ENCODE measurements at regions of chr14 and their contacts with region 1.

Region 1: GRCh38 chr14:92135267-92135666 is 13.5 kb downstream of the CPSF2 start:
- DNase-seq: no peak
- H3K4me3 ChIP-seq: no peak overlapping the region
- H3K27ac ChIP-seq: no peak overlapping the region
- H3K4me1 ChIP-seq: no peaks in the 10 kb centered on the region
- H3K27me3 ChIP-seq: no peaks in the 10 kb centered on the region
- CTCF ChIP-seq: peak; percentile 36 to 53 (median 49)
- EP300 ChIP-seq: no peak
- POLR2A ChIP-seq: no peak

Region 2: DNA sequence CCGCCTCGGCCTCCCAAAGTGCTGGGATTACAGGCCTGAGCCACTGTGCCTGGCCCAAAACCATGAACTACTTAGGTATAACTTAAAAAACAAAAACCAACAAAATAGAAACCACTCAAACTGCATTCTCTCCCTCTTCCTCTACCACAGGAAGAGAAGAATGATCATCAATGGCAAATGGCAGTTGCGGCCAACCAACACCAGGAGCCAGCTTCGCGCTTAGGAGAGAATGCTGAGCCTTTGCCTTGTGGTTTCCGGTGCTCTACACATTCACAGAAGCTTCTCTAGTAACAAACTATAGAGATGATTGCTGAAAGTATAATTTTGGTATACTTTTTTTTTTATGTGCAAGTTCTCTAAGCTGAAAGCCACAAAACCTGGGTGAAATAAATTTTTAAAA is 420.5 kb before region 1 on chr14:
- in situ Hi-C with region 1: no loop called
- intact Hi-C with region 1: no loop called
- DNase-seq: no peak
- H3K4me3 ChIP-seq: no peak overlapping the region
- H3K27ac ChIP-seq: no peak overlapping the region
- H3K4me1 ChIP-seq: no peaks in the 10 kb centered on the region
- H3K27me3 ChIP-seq: no peaks in the 10 kb centered on the region
- CTCF ChIP-seq: no peak
- EP300 ChIP-seq: no peak
- POLR2A ChIP-seq: no peak

Region 3: DNA sequence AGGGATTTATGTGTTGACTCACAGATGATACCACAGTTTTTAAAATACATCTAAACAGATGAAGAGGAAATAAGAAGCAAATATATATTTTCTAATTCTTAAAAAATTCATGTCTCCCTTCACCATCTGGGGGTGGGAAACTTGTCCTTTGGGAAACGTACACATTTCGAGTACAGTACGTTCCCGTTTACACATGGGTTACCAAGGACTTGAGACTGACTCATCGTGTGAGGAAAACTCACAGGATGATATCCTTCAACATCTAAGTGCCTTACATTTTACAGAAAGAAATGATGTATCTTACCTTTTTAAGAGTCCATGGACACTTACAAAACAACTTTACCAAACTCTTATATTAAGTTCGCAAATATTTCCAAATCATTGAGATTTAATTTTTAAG is 171.8 kb before region 1 on chr14:
- in situ Hi-C with region 1: no loop called
- intact Hi-C with region 1: no loop called
- DNase-seq: no peak
- H3K4me3 ChIP-seq: no peak overlapping the region
- H3K27ac ChIP-seq: no peak overlapping the region
- H3K4me1 ChIP-seq: no peaks in the 10 kb centered on the region
- H3K27me3 ChIP-seq: no peaks in the 10 kb centered on the region
- CTCF ChIP-seq: no peak
- EP300 ChIP-seq: peak; percentile 23
- POLR2A ChIP-seq: no peak

Region 4: DNA sequence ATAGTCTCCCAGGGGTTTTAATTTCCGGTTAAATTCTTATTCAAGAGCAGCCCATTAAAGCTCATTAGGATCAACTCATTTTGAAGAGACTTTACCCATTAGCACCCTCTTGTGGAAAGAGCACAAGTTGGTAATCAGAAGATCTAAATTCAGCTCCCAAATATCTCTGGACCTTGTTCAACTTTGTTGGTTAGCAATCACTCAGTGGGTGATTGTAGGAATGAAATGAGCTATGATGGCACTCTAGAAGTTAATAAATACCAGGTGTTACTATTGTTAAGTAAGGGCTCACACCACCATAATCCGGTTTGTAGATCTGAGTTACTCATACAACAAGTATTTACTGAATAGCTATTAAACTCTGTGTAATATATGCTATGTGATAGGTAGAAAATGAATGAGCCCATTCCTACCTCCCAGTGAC is 138.3 kb before region 1 on chr14:
- in situ Hi-C with region 1: no loop called
- intact Hi-C with region 1: no loop called
- DNase-seq: no peak
- H3K4me3 ChIP-seq: no peak overlapping the region
- H3K27ac ChIP-seq: no peak overlapping the region
- H3K4me1 ChIP-seq: peaks cover 0 to 4% (median 2%) of the 10 kb centered on the region in 4 donors
- H3K27me3 ChIP-seq: no peaks in the 10 kb centered on the region
- CTCF ChIP-seq: peak; percentile 26 to 57 (median 49)
- EP300 ChIP-seq: no peak
- POLR2A ChIP-seq: no peak

Region 5: GRCh38 chr14:92456215-92457015 is 321.1 kb after region 1 on chr14:
- in situ Hi-C with region 1: loop called in 2 of 4 experiments (anchors 10 to 25 kb)
- intact Hi-C with region 1: no loop called
- DNase-seq: peak; percentile 35
- H3K4me3 ChIP-seq: no peak overlapping the region
- H3K27ac ChIP-seq: no peak overlapping the region
- H3K4me1 ChIP-seq: peaks cover 0 to 8% (median 2%) of the 10 kb centered on the region in 4 donors
- H3K27me3 ChIP-seq: no peaks in the 10 kb centered on the region
- CTCF ChIP-seq: peak; percentile 55 to 65 (median 59)
- EP300 ChIP-seq: no peak
- POLR2A ChIP-seq: no peak

Measured in transverse colon (tissue), 4 donors.